ENCODE measurements at regions of chr12 and their contacts with region 1.

Region 1: GRCh38 chr12:38771871-38772270 is 133.5 kb downstream of the CPNE8 start:
- DNase-seq: peak; percentile 71
- ATAC-seq: peak; percentile 85
- H3K4me3 ChIP-seq: peak overlapping the region; percentile 6; the same call in 1 of the 2 replicates
- H3K27ac ChIP-seq: peak overlapping the region; percentile 75
- H3K4me1 ChIP-seq: peaks cover 11% of the 10 kb centered on the region; the same call in 1 of the 2 replicates
- H3K27me3 ChIP-seq: no peaks in the 10 kb centered on the region
- CTCF ChIP-seq: no peak
- EP300 ChIP-seq: no peak
- POLR2A ChIP-seq: no peak
- RAD21 ChIP-seq: no peak

Region 2: GRCh38 chr12:38332814-38333213 is 439.1 kb before region 1 on chr12:
- CTCF ChIA-PET with region 1: no interaction called
- POLR2A ChIA-PET with region 1: no interaction called
- RAD21 ChIA-PET with region 1: interaction called, 3 read pairs
- SMC1A ChIA-PET with region 1: no interaction called
- in situ Hi-C with region 1: loop called (anchors 25 kb)
- intact Hi-C with region 1: no loop called
- DNase-seq: no peak
- ATAC-seq: no peak
- H3K4me3 ChIP-seq: no peak overlapping the region
- H3K27ac ChIP-seq: no peak overlapping the region
- H3K4me1 ChIP-seq: no peaks in the 10 kb centered on the region
- H3K27me3 ChIP-seq: no peaks in the 10 kb centered on the region
- CTCF ChIP-seq: no peak
- EP300 ChIP-seq: no peak
- POLR2A ChIP-seq: no peak
- RAD21 ChIP-seq: no peak

Region 3: GRCh38 chr12:38469715-38470114 is 302.2 kb before region 1 on chr12:
- CTCF ChIA-PET with region 1: no interaction called
- POLR2A ChIA-PET with region 1: no interaction called
- RAD21 ChIA-PET with region 1: no interaction called
- SMC1A ChIA-PET with region 1: no interaction called
- in situ Hi-C with region 1: no loop called
- intact Hi-C with region 1: no loop called
- DNase-seq: no peak
- ATAC-seq: no peak
- H3K4me3 ChIP-seq: no peak overlapping the region
- H3K27ac ChIP-seq: no peak overlapping the region
- H3K4me1 ChIP-seq: no peaks in the 10 kb centered on the region
- H3K27me3 ChIP-seq: no peaks in the 10 kb centered on the region
- CTCF ChIP-seq: no peak
- EP300 ChIP-seq: no peak
- POLR2A ChIP-seq: no peak
- RAD21 ChIP-seq: no peak

Region 4: DNA sequence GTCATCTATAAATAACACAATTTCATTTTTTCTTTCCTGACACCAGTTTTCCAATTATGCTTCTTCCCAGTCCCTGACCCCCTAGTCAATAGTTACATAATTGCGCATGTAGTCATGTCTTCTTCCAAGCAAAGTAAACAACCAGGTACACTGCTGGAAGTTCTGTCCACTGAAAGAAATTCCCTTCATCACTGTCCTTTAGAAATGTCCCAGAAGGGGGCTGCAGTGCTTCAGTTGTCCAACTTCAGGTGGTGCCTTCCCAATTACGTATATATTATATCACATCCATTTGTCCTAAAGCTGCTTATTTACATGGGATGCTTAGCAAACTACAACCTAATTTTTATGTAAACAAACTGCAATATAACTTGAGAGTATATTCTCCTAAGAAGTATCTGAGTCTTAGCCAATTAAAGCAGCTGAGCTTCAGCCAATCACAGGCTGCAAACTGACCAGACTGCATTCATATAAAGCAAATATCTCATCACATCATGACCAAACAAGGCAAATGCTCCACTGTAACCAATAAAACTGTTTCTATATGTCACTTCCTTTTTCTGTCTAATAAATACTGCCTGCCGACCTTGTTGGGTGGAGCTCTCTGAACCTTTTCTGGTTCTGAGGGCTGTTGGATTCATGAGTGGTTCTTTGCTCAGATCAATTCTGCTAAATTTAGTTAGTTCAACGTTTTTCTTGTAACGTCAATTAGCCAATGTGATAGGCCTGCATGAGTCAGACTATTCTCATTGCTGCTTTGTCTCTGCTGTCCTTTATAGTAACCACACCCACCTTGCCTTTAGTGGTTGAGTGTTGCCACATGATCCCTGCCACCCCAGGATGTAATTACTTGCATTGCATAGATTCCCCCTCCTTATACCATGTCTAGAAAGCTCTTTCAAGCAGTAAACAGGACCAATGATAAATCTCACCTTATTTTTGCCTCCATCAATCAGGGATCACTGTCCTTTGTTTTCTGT is 216.0 kb before region 1 on chr12:
- CTCF ChIA-PET with region 1: no interaction called
- POLR2A ChIA-PET with region 1: no interaction called
- RAD21 ChIA-PET with region 1: no interaction called
- SMC1A ChIA-PET with region 1: no interaction called
- in situ Hi-C with region 1: no loop called
- intact Hi-C with region 1: no loop called
- DNase-seq: no peak
- ATAC-seq: peak; percentile 52
- H3K4me3 ChIP-seq: no peak overlapping the region
- H3K27ac ChIP-seq: no peak overlapping the region
- H3K4me1 ChIP-seq: no peaks in the 10 kb centered on the region
- H3K27me3 ChIP-seq: no peaks in the 10 kb centered on the region
- CTCF ChIP-seq: no peak
- EP300 ChIP-seq: no peak
- POLR2A ChIP-seq: no peak
- RAD21 ChIP-seq: no peak

Region 5: DNA sequence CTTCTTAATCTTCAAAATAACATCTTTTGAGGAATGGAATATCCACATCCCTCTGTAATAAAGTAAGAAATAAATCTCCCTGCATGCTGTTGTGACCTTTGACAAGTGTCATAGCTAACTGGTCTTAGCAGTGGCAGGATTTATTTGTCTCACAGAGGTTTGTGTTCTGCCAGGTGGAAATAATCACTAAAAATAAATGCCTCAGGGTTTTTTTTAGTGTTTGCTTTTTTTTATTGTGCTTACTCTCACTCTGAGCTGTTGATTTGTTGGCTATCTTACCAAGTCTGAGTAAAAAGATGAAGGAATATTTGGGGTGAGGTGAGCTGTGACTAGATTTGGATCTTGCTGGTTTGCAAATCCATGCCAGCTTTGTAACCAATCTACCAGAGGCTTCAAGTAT is 169.9 kb before region 1 on chr12:
- CTCF ChIA-PET with region 1: no interaction called
- POLR2A ChIA-PET with region 1: no interaction called
- RAD21 ChIA-PET with region 1: no interaction called
- SMC1A ChIA-PET with region 1: no interaction called
- in situ Hi-C with region 1: no loop called
- intact Hi-C with region 1: no loop called
- DNase-seq: no peak
- ATAC-seq: peak; percentile 50
- H3K4me3 ChIP-seq: no peak overlapping the region
- H3K27ac ChIP-seq: no peak overlapping the region
- H3K4me1 ChIP-seq: no peaks in the 10 kb centered on the region
- H3K27me3 ChIP-seq: no peaks in the 10 kb centered on the region
- CTCF ChIP-seq: no peak
- EP300 ChIP-seq: no peak
- POLR2A ChIP-seq: no peak
- RAD21 ChIP-seq: no peak

Region 6: DNA sequence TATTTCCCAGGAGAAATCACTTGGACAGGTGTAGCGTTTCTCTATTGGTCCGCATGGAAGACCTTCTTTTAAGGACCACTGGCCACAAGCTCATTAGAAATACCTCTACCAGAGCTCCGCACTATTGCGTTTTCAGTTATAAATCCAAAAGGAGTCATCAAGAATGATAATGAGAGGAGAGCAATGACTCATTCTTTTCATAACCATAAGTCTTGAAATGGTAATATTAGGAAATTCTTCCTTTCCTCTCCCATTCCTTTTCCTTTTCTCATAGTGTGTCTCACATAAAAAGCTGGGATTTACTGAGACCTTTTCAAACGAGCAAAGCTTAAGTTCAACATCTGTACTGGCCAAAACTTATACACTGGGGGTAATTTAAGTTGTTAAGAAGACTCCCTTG is 82.2 kb before region 1 on chr12:
- CTCF ChIA-PET with region 1: no interaction called
- POLR2A ChIA-PET with region 1: interaction called, 3 read pairs
- RAD21 ChIA-PET with region 1: no interaction called
- SMC1A ChIA-PET with region 1: interaction called, 4 read pairs
- in situ Hi-C with region 1: loop called (anchors 25 kb)
- intact Hi-C with region 1: no loop called
- DNase-seq: no peak
- ATAC-seq: no peak
- H3K4me3 ChIP-seq: no peak overlapping the region
- H3K27ac ChIP-seq: no peak overlapping the region
- H3K4me1 ChIP-seq: no peaks in the 10 kb centered on the region
- H3K27me3 ChIP-seq: no peaks in the 10 kb centered on the region
- CTCF ChIP-seq: no peak
- EP300 ChIP-seq: no peak
- POLR2A ChIP-seq: no peak
- RAD21 ChIP-seq: no peak

Region 7: DNA sequence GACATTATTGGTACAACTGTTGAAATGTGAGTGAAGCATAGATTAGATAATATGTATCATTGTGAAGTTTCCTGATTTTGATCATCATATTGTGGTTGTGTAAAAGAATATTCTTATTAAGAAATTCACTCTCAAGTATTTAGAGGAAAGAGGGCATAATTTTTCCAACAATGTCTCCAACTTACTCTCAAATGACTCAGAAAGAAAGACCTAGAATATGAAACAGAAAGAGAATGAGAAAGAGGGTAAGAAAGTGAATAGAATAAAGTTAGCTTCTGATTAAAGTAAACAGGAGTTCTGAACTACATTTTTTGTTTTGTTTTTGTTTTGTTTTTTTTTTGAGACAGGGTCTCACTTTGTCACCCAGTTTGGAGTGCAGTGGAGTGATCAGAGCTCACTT is 10.5 kb after region 1 on chr12:
- CTCF ChIA-PET with region 1: interaction called, 5 read pairs
- POLR2A ChIA-PET with region 1: interaction called, 8 read pairs
- RAD21 ChIA-PET with region 1: interaction called, 7 read pairs
- SMC1A ChIA-PET with region 1: interaction called, 18 read pairs
- in situ Hi-C with region 1: no loop called
- intact Hi-C with region 1: no loop called
- DNase-seq: no peak
- ATAC-seq: peak; percentile 69
- H3K4me3 ChIP-seq: no peak overlapping the region
- H3K27ac ChIP-seq: peak overlapping the region; percentile 42
- H3K4me1 ChIP-seq: no peaks in the 10 kb centered on the region
- H3K27me3 ChIP-seq: no peaks in the 10 kb centered on the region
- CTCF ChIP-seq: no peak
- EP300 ChIP-seq: no peak
- POLR2A ChIP-seq: no peak
- RAD21 ChIP-seq: no peak

Region 8: DNA sequence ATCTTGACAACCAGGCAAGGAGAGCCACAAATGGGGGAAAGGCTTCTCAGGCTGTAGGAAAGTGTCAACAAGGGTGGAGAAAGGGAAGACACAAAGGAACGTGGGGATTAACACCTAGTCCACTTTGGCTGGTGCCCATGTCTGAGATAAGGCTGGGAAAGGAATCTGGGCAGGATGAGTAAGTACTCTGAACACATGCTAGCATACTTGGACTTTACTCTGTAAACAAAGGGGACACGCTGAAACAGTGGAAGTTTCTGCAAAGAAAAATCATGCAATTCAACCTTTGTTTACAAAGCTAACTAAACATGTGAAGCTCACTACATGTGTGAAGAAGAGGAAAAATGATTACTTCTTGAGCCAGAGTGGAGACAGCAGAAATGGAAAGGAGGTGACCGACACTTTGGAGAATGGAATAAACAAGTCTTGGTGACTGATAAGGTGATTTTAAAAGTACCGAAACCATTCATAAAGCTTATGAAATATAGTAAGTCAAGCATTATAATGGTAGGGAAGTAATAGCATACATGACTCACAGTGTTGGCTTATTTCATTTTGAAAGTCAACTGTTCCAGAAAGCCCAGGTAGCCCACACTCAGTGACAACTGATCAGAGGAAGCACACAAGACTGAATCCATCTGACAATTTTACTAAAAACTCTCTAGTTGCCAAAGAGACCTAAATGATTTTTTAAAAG is 120.4 kb after region 1 on chr12:
- CTCF ChIA-PET with region 1: interaction called, 4 read pairs
- POLR2A ChIA-PET with region 1: interaction called, 4 read pairs
- RAD21 ChIA-PET with region 1: interaction called, 17 read pairs
- SMC1A ChIA-PET with region 1: interaction called, 10 read pairs
- in situ Hi-C with region 1: loop called (anchors 25 kb)
- intact Hi-C with region 1: no loop called
- DNase-seq: no peak
- ATAC-seq: peak; percentile 84
- H3K4me3 ChIP-seq: no peak overlapping the region
- H3K27ac ChIP-seq: peak overlapping the region; percentile 5; the same call in 1 of the 2 replicates
- H3K4me1 ChIP-seq: no peaks in the 10 kb centered on the region
- H3K27me3 ChIP-seq: no peaks in the 10 kb centered on the region
- CTCF ChIP-seq: no peak
- EP300 ChIP-seq: no peak
- POLR2A ChIP-seq: no peak
- RAD21 ChIP-seq: no peak

Region 9: DNA sequence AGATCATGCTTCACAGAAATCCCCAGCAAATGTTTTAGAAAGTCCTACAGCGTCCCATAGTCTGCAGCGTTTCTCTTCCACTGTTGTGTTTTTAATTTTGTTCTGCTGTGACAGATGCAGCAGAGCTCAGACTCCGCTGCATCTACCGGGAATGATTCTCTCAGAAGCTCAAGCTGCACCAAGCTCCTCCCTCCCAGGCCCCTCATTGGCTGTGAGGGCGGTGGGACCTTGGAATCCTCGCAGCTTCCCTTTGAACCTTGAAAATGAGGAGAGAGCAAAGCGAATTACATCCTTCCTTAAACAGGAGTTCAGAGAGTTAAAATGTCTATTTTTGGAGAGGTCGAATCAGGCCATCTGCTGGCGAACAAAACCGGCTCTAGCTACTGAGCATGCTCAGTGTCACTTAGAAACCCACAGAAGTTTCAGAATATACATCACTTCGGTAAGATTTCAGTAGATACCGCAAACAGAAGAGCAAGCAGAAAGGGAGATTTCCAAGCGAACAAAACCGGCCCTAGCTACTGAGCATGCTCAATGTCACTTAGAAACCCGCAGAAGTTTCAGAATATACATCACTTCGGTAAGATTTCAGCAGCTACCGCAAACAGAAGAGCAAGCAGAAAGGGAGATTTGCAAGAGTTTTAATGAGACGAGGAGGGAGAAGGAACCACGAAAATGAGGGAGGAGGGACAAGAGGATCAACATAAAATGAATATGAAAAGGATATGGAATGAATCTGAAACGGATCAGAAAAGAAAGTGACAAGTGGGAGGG is 848.0 kb after region 1 on chr12 and contains the start of gene ABCD2:
- CTCF ChIA-PET with region 1: no interaction called
- POLR2A ChIA-PET with region 1: interaction called, 3 read pairs
- RAD21 ChIA-PET with region 1: no interaction called
- SMC1A ChIA-PET with region 1: no interaction called
- in situ Hi-C with region 1: loop called (anchors 25 kb)
- intact Hi-C with region 1: no loop called
- DNase-seq: peak; percentile 97
- ATAC-seq: peak; percentile 62
- H3K4me3 ChIP-seq: peak within 1 kb of the TSS; percentile 95
- H3K27ac ChIP-seq: peak within 1 kb of the TSS; percentile 98
- H3K4me1 ChIP-seq: peaks cover 16% of the 10 kb centered on the region
- H3K27me3 ChIP-seq: no peaks in the 10 kb centered on the region
- CTCF ChIP-seq: peak; percentile 3 to 30 (median 21); a peak in 2 of 6 replicates
- EP300 ChIP-seq: peak; percentile 32 to 86; a peak in 3 of 4 replicates
- POLR2A ChIP-seq: peak; percentile 62
- RAD21 ChIP-seq: no peak
- polyA plus RNA-seq, gene ABCD2: 4.4 to 5.7 TPM